ENCODE measurements at regions of chr20 and their contacts with region 1.

Region 1: GRCh38 chr20:4244700-4245485 is 229.5 kb upstream of the RNF24 start:
- DNase-seq: peak; percentile 95
- ATAC-seq: peak; percentile 39
- H3K4me3 ChIP-seq: peak overlapping the region in 1 of 3 experiments; percentile 44; a peak in 2 of 6 replicates
- H3K27ac ChIP-seq: no peak overlapping the region
- H3K4me1 ChIP-seq: peaks cover 30% of the 10 kb centered on the region
- H3K27me3 ChIP-seq: peaks cover 2 to 7% of the 10 kb centered on the region in 2 experiments; a peak in 4 of 5 replicates
- CTCF ChIP-seq: 0 out of 2 replicates have a peak, but pooled peaks have one; percentile 25
- EP300 ChIP-seq: peak in 1 of 2 experiments; percentile 58; a peak in 2 of 4 replicates
- POLR2A ChIP-seq: peak in 1 of 2 experiments; percentile 42; a peak in 1 of 4 replicates
- RAD21 ChIP-seq: no peak

Region 2: DNA sequence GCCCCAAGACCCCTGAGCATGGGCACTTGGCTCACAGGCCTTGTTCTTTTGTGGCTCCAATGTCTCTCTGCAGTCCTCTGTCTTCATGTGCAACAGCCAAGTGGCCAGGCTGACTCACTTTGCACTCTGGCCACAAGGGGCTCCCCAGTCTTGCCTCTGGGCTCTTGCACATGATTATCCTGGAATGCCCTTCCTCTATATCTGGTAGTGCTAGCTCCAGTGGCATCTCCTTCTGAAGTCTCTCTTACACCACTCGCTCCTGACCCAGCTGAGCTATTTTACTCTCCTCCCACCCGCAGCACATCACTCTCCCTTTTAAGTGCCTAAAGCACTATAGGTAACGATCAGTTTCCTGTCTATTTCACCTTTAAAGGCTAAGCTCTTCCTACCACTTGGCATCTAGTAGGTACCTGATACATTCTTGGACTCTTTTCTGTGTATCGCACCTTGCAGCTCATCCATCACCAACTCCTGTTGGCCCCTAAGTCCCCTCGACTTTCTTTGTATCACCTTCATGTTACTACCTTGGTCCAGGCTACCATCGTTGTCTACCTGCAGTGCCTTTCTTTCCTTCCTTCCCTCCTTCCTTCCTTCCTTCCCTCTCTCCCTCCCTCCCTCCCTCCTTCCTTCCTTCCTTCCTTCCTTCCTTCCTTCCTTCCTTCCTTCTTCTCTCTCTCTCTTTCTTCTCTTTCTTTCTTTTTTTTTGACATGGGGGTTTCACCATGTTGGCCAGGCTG is 17.6 kb before region 1 on chr20:
- CTCF ChIA-PET with region 1: no interaction called
- POLR2A ChIA-PET with region 1: interaction called, 12 read pairs
- in situ Hi-C with region 1: no loop called
- intact Hi-C with region 1: no loop called
- DNase-seq: peak; percentile 68
- ATAC-seq: peak; percentile 78
- H3K4me3 ChIP-seq: no peak overlapping the region
- H3K27ac ChIP-seq: no peak overlapping the region
- H3K4me1 ChIP-seq: peaks cover 63% of the 10 kb centered on the region
- H3K27me3 ChIP-seq: no peaks in the 10 kb centered on the region
- CTCF ChIP-seq: peak; percentile 67
- EP300 ChIP-seq: no peak
- POLR2A ChIP-seq: no peak
- RAD21 ChIP-seq: peak; percentile 46

Measured in HepG2 (cell line).